PC-9 (cell line): ENCODE measurements at regions of chr1 and their contacts with region 1.

Region 1: DNA sequence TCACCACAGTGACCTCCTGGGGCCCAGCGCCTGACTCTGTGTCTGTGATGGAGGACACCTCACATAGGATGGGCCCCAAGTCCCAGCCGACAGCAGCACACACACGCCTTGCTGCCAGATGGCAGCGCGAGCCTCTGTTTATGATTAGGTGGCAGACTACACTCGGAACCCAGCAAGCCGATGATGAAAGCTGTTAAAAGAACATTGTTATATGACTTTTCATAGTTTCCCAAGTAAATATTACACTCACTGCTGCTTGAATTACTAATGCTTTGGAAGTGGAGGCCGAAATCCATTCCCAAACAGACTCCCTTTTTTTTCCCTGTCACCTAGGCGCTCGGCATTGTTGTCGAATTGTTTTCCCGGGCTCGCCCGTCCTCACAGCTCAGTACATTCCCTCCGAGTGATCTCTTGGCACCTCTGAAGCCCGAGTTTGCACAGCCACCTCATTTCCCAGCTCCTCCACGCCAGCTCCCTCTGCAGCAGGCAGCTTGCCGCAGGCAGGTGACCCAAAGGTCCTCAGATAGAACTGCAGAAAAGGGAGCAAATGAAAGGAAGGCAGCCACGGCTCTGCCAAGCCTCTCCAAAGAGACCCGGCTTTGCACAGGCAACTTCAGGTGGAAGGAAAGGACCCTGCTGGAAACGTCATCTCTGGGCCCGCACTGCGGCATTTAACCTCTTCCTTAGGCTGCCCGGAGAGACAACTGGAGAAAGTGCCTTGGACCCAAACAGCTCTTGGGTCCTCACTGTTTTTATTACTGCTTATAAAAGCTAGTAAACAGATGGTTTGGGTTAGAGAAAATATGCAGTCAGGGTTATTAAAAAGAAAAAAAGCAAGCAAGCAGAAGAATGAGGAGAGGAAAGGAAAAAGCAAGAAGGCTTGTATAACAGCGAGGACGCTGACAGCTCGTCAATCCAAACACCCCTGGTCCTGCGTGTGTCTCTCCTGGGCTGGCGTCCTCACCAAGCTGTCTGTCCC is 72.2 kb upstream of the SLC25A33 start:
- DNase-seq: no peak
- H3K4me3 ChIP-seq: no peak overlapping the region
- H3K27ac ChIP-seq: no peak overlapping the region
- H3K4me1 ChIP-seq: no peaks in the 10 kb centered on the region
- H3K27me3 ChIP-seq: no peaks in the 10 kb centered on the region
- CTCF ChIP-seq: no peak

Region 2: DNA sequence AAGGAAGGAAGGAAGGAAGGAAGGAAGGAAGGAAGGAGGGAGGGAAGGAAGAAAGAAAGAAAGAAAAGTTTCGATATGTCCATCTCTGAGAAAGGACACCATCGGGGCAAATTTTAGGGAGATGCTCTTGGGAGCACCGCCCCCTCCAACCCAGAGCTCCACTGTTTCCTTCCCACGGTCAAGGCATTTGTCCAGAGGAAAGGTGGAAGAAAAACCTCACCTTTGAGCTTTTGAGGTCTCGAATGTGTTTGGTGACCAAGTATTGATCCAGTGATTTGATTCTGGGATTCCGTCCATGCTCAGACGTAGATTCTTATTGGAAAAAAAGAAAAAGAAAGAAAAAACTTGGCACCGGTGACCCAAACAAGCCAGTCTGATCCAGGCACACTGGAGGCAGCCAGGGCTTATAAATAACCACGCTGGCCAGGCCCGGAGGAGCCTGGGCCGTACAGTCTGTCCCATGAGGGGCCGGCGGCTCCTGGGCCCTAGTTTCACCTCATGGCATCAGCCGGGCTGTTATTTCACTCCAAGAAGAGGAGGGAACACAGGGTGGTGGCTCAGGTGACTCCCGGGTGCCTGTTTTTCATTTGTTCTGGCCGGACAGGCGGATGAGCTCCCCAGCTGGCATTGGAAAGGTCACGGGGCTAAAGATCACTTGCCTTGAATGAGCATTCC is 36.1 kb after region 1 on chr1:
- CTCF ChIA-PET with region 1: no interaction called
- POLR2A ChIA-PET with region 1: no interaction called
- intact Hi-C with region 1: no loop called
- DNase-seq: no peak
- H3K4me3 ChIP-seq: no peak overlapping the region
- H3K27ac ChIP-seq: no peak overlapping the region
- H3K4me1 ChIP-seq: no peaks in the 10 kb centered on the region
- H3K27me3 ChIP-seq: no peaks in the 10 kb centered on the region
- CTCF ChIP-seq: no peak

Region 3: DNA sequence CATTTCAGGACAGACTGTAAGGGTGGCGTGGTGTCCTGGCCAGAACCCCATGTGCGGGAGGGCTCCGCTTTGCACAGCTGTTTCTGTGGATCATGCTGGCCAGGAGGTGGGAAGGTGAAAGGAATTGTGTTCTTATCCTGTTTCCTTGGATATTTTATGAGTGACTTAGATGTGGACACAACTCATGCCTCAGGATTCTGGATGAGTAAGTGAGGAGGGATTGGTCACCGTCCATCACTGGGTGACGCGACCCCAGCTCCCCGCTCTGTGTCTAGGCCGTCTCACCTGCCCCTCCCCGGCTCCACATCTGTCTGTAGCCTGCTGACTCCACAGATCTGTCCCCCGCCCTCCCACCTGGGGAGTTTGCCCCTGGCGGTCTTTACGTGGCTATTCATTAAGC is 233.3 kb after region 1 on chr1:
- CTCF ChIA-PET with region 1: no interaction called
- POLR2A ChIA-PET with region 1: interaction called, 27 read pairs
- intact Hi-C with region 1: no loop called
- DNase-seq: peak; percentile 56 to 60
- H3K4me3 ChIP-seq: no peak overlapping the region
- H3K27ac ChIP-seq: no peak overlapping the region
- H3K4me1 ChIP-seq: peaks cover 18% of the 10 kb centered on the region; the same call in 1 of the 2 replicates
- H3K27me3 ChIP-seq: no peaks in the 10 kb centered on the region
- CTCF ChIP-seq: no peak